Mammary epithelial cell (primary cell): ENCODE measurements at regions of chr3 and their contacts with region 1.

Region 1: DNA sequence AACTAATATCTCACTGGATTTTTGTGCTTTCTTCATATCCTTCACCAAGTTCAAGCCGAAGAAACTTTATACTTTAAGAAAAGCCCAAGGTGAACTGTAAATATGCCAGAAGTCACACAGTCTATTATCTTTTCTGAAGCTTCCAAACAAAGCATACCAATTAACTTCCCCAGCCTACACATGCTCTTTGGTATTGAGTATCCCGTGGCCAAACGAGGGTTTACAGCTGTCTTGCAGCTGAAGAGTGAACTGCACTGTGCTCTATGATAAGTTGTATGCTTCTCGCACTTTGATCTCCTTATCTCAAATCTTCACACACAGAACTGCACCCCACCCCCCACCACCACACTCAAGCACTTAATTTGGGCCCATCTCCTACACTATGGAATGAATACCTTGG is 215.6 kb upstream of the VEPH1 start:
- DNase-seq: no peak
- H3K4me3 ChIP-seq: no peak overlapping the region
- H3K27ac ChIP-seq: no peak overlapping the region
- H3K4me1 ChIP-seq: no peaks in the 10 kb centered on the region
- H3K27me3 ChIP-seq: no peaks in the 10 kb centered on the region
- CTCF ChIP-seq: no peak

Region 2: DNA sequence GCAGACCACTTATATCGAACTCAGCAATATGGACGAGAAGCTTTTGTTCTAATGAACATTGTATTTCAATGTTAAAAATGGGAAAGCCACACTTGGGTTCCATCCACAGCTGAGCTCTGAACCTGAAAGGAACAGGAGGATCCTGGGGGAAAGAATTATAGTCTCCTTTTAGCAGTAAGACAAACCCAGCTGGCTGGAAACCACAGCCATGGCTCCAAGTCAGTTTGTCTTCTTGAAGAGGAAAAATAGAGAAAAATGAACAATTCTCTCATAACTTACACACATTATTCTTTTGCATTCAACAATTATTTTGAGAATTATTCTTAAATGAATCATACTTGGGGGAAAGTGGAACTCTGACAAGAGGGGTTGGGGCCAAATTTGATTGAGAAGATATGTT is 66.4 kb before region 1 on chr3:
- CTCF ChIA-PET with region 1: no interaction called
- dilution Hi-C with region 1: loop called (anchors 5 kb)
- in situ Hi-C with region 1: no loop called
- intact Hi-C with region 1: no loop called
- DNase-seq: no peak
- H3K4me3 ChIP-seq: no peak overlapping the region
- H3K27ac ChIP-seq: no peak overlapping the region
- H3K4me1 ChIP-seq: no peaks in the 10 kb centered on the region
- H3K27me3 ChIP-seq: peaks cover 1% of the 10 kb centered on the region
- CTCF ChIP-seq: no peak

Region 3: DNA sequence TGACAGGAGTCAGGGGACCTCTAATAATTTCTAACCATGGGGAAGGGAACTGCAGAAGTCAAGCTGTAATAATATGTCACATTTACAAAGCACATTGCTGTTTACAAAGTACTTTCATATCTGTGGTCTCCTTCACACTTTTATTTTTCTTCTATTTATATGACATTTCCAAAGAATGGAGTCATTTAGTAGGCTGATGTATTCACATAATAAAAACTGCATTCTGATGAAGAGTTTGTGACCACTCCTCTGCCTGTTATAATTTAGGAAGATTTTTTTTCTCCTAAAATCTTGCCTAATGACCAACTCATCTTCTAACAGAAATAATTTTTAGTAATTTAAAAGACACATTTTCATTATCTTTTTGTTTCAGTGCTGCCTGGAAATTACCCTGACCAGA is 56.6 kb after region 1 on chr3:
- CTCF ChIA-PET with region 1: no interaction called
- dilution Hi-C with region 1: loop called (anchors 5 kb)
- in situ Hi-C with region 1: no loop called
- intact Hi-C with region 1: no loop called
- DNase-seq: no peak
- H3K4me3 ChIP-seq: no peak overlapping the region
- H3K27ac ChIP-seq: no peak overlapping the region
- H3K4me1 ChIP-seq: peaks cover 8% of the 10 kb centered on the region
- H3K27me3 ChIP-seq: no peaks in the 10 kb centered on the region
- CTCF ChIP-seq: no peak

Region 4: GRCh38 chr3:157819270-157820156 is 100.7 kb after region 1 on chr3:
- CTCF ChIA-PET with region 1: no interaction called
- dilution Hi-C with region 1: loop called (anchors 5 kb)
- in situ Hi-C with region 1: no loop called
- intact Hi-C with region 1: no loop called
- DNase-seq: no peak
- H3K4me3 ChIP-seq: no peak overlapping the region
- H3K27ac ChIP-seq: no peak overlapping the region
- H3K4me1 ChIP-seq: no peaks in the 10 kb centered on the region
- H3K27me3 ChIP-seq: no peaks in the 10 kb centered on the region
- CTCF ChIP-seq: no peak

Region 5: DNA sequence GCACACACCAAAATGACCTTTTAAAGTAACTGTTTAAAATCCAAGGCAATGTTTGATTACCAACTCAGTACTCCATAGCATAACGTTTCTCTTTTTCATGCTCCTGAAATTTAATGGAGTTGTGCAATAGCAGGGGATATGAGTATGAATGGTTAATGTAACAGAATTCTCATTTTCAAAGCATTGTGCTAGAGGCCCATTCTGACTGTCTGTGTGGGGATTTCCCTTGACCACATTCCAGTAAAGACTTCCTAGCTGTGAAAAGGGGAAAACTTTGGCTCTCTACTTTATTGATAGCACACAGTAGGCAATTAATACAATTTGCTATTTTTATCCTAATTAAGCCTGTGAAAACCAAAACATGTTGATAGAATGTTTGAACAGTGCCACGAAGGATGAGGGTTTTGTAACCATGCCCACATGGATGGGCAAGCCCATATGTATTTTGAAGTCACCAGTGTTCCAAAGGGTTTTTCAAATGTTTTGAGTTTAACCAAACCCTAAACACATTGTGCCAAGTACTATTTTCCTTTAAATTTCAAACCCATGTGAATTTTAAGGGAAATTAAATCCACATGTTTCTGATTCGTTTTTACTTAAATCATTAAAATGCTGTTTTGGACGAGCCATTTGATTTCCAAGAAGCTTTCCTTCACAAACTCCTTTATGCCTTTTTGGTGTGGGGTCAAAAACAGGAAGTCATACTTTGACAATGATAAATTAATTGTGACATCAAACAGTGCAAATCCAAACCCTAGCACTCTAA is 126.2 kb after region 1 on chr3:
- CTCF ChIA-PET with region 1: no interaction called
- dilution Hi-C with region 1: loop called (anchors 10 kb)
- in situ Hi-C with region 1: no loop called
- intact Hi-C with region 1: no loop called
- DNase-seq: no peak
- H3K4me3 ChIP-seq: no peak overlapping the region
- H3K27ac ChIP-seq: no peak overlapping the region
- H3K4me1 ChIP-seq: no peaks in the 10 kb centered on the region
- H3K27me3 ChIP-seq: no peaks in the 10 kb centered on the region
- CTCF ChIP-seq: no peak

Region 6: GRCh38 chr3:158801696-158802408 is 1083.1 kb after region 1 on chr3 and contains the start of gene MFSD1:
- CTCF ChIA-PET with region 1: no interaction called
- dilution Hi-C with region 1: no loop called
- in situ Hi-C with region 1: no loop called
- intact Hi-C with region 1: no loop called
- DNase-seq: peak; percentile 89
- H3K4me3 ChIP-seq: peak within 1 kb of the TSS; percentile 80 to 85 (median 81)
- H3K27ac ChIP-seq: peak within 1 kb of the TSS; percentile 63
- H3K4me1 ChIP-seq: peaks cover 18% of the 10 kb centered on the region
- H3K27me3 ChIP-seq: no peaks in the 10 kb centered on the region
- CTCF ChIP-seq: no peak
- total RNA-seq, gene MFSD1: 35.3 to 92.5 TPM